A549 (cell line): ENCODE measurements at regions of chr7 and their contacts with region 1.

Region 1: GRCh38 chr7:55255496-55256435 is 109.4 kb upstream of the LANCL2 start:
- DNase-seq: peak; percentile 71 to 85
- ATAC-seq: peak; percentile 89 to 91
- H3K4me3 ChIP-seq: peak overlapping the region; percentile 69
- H3K27ac ChIP-seq: peak overlapping the region; percentile 91 to 95
- H3K4me1 ChIP-seq: peaks cover 4% of the 10 kb centered on the region; the same call in 1 of the 3 replicates
- CTCF ChIP-seq: peak; percentile 82
- EP300 ChIP-seq: no peak
- POLR2A ChIP-seq: no peak
- RAD21 ChIP-seq: peak; percentile 91 to 94

Region 2: DNA sequence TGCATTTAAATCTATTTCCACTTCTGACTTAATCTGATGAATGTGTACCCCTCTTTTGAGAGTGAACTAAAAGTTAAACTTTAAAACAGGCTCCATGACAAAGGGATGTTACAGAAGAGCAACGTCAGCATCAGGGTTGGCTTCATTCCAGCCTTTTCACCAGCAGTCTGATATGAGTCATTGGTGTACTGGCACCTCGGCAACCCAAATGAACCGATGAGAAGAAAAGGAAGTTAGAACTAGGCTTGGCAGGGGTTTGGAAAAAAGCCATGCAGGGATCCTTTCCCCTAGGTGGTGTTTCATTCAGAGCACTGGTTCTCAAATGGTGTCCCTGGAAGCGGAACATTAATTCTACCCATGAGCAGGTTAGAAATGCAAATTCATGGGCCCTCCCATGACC is 550.3 kb before region 1 on chr7:
- CTCF ChIA-PET with region 1: no interaction called
- POLR2A ChIA-PET with region 1: no interaction called
- DNase-seq: peak; percentile 51 to 78
- ATAC-seq: peak; percentile 69 to 85; a peak in 5 of 6 replicates
- H3K4me3 ChIP-seq: no peak overlapping the region
- H3K27ac ChIP-seq: no peak overlapping the region
- H3K4me1 ChIP-seq: peaks cover 9% of the 10 kb centered on the region; the same call in 2 of the 3 replicates
- CTCF ChIP-seq: no peak
- EP300 ChIP-seq: no peak
- POLR2A ChIP-seq: no peak
- RAD21 ChIP-seq: no peak

Region 3: GRCh38 chr7:54831644-54832099 is 424.1 kb before region 1 on chr7:
- CTCF ChIA-PET with region 1: interaction called, 78 read pairs
- POLR2A ChIA-PET with region 1: no interaction called
- DNase-seq: peak in 1 of 2 experiments; percentile 63
- ATAC-seq: peak; percentile 69 to 81
- H3K4me3 ChIP-seq: peak overlapping the region; percentile 24; the same call in 2 of the 3 replicates
- H3K27ac ChIP-seq: peak overlapping the region; percentile 82 to 88
- H3K4me1 ChIP-seq: peaks cover 30% of the 10 kb centered on the region
- CTCF ChIP-seq: no peak
- EP300 ChIP-seq: peak; percentile 65 to 81; a peak in 2 of 5 replicates
- POLR2A ChIP-seq: no peak
- RAD21 ChIP-seq: 0 out of 5 replicates have a peak, but pooled peaks of 1 of the 2 experiments have one; percentile 8

Region 4: GRCh38 chr7:55036958-55037736 is 218.6 kb before region 1 on chr7:
- CTCF ChIA-PET with region 1: interaction called, 13 read pairs
- POLR2A ChIA-PET with region 1: no interaction called
- DNase-seq: no peak
- ATAC-seq: no peak
- H3K4me3 ChIP-seq: no peak overlapping the region
- H3K27ac ChIP-seq: peak overlapping the region in 1 of 2 experiments; percentile 51; a peak in 2 of 6 replicates
- H3K4me1 ChIP-seq: peaks cover 80% of the 10 kb centered on the region
- CTCF ChIP-seq: no peak
- EP300 ChIP-seq: no peak
- POLR2A ChIP-seq: no peak
- RAD21 ChIP-seq: no peak

Region 5: GRCh38 chr7:55138663-55139062 is 117.1 kb before region 1 on chr7:
- CTCF ChIA-PET with region 1: interaction called, 20 read pairs
- POLR2A ChIA-PET with region 1: no interaction called
- DNase-seq: no peak
- ATAC-seq: no peak
- H3K4me3 ChIP-seq: no peak overlapping the region
- H3K27ac ChIP-seq: no peak overlapping the region
- H3K4me1 ChIP-seq: peaks cover 29% of the 10 kb centered on the region
- CTCF ChIP-seq: no peak
- EP300 ChIP-seq: no peak
- POLR2A ChIP-seq: no peak
- RAD21 ChIP-seq: no peak

Region 6: DNA sequence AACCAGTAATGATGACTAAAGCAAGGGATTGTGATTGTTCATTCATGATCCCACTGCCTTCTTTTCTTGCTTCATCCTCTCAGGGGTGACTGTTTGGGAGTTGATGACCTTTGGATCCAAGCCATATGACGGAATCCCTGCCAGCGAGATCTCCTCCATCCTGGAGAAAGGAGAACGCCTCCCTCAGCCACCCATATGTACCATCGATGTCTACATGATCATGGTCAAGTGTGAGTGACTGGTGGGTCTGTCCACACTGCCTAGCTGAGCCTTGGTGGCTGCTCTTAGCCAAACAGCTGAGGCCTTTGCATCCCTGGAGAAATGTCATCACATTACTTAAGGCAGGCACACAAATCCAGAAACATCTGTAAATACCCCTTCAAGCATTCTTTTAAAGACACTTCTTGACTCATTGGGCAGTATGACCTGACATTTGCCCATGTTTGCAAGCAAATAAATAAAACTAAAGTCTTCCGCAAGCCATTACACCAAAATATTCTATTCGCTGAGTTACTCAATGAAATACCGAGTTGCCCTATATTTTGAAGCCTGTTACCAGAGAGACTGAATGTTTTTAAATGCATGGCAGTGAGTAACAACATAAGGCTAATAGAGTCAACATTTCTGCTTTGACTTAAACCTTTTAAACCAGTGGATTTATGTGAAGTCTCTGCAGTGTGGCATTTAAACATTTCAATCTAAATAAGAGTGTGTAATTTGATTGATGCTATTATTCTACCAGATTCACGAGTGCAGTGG is 57.0 kb before region 1 on chr7:
- CTCF ChIA-PET with region 1: interaction called, 21 read pairs
- POLR2A ChIA-PET with region 1: no interaction called
- DNase-seq: no peak
- ATAC-seq: no peak
- H3K4me3 ChIP-seq: no peak overlapping the region
- H3K27ac ChIP-seq: no peak overlapping the region
- H3K4me1 ChIP-seq: no peaks in the 10 kb centered on the region
- CTCF ChIP-seq: no peak
- EP300 ChIP-seq: no peak
- POLR2A ChIP-seq: no peak
- RAD21 ChIP-seq: no peak

Region 7: GRCh38 chr7:55280031-55280454 is 24.3 kb after region 1 on chr7:
- CTCF ChIA-PET with region 1: interaction called, 21 read pairs
- POLR2A ChIA-PET with region 1: no interaction called
- DNase-seq: peak; percentile 67 to 73
- ATAC-seq: peak; percentile 90 to 97
- H3K4me3 ChIP-seq: no peak overlapping the region
- H3K27ac ChIP-seq: no peak overlapping the region
- H3K4me1 ChIP-seq: no peaks in the 10 kb centered on the region
- CTCF ChIP-seq: peak; percentile 78
- EP300 ChIP-seq: no peak
- POLR2A ChIP-seq: no peak
- RAD21 ChIP-seq: peak; percentile 88 to 92

Region 8: DNA sequence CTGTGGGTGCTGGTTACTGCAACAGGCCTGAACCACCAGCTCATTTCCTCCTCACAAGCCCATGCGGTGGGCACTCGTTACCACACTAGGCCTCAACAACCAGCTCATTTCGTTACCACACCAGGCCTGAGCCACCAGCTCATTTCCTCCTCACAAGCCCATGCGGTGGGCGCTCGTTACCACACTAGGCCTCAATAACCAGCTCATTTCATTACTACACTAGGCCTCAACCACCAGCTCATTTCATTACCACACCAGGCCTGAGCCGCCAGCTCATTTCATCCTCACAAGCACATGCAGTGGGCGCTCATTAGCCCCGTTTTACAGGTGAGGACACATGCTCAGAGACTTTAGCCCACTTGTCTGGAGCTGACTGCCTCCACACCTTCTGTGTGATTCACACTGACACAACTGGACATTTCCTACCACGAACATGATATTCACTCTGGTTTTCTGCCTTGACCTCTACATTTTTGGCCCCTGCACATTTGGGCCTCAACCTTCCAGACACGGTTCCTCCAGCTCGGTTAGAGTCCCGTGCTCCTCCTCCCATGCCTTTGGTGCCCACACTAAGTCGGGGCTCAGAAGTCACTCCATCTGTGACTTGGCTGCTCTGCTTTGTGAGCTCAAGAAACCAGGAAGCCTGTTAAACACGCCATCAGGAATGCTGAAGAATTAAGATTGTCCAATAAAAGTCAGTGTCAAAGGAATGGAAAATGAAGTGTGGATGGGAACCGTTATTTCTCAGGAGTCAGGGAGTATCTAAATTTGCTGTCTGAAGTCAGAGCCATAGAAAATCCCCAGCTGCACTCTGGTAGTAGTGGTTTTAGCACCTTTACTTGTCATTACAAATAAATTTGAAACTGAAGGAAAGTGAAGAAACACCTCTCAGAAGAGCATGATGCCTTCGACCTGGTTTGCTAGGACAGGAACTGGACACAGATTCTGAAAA is 53.5 kb after region 1 on chr7:
- CTCF ChIA-PET with region 1: no interaction called
- POLR2A ChIA-PET with region 1: no interaction called
- DNase-seq: no peak
- ATAC-seq: no peak
- H3K4me3 ChIP-seq: no peak overlapping the region
- H3K27ac ChIP-seq: no peak overlapping the region
- H3K4me1 ChIP-seq: no peaks in the 10 kb centered on the region
- CTCF ChIP-seq: no peak
- EP300 ChIP-seq: no peak
- POLR2A ChIP-seq: no peak
- RAD21 ChIP-seq: no peak